Endothelial cell of umbilical vein (primary cell): ENCODE measurements at regions of chr2 and their contacts with region 1.

Region 1: GRCh38 chr2:173448938-173449471 is 94.3 kb downstream of the CDCA7 start:
- DNase-seq: peak; percentile 64
- H3K4me3 ChIP-seq: peak overlapping the region; percentile 29 to 45 (median 37)
- H3K27ac ChIP-seq: no peak overlapping the region
- H3K4me1 ChIP-seq: peaks cover 3% of the 10 kb centered on the region
- H3K27me3 ChIP-seq: peaks cover 3 to 9% of the 10 kb centered on the region in 2 experiments
- CTCF ChIP-seq: peak; percentile 63 to 65
- POLR2A ChIP-seq: peak; percentile 21

Region 2: GRCh38 chr2:173419506-173419905 is 29.5 kb before region 1 on chr2:
- CTCF ChIA-PET with region 1: interaction called, 10 read pairs
- POLR2A ChIA-PET with region 1: no interaction called
- dilution Hi-C with region 1: no loop called
- intact Hi-C with region 1: no loop called
- DNase-seq: no peak
- H3K4me3 ChIP-seq: no peak overlapping the region
- H3K27ac ChIP-seq: no peak overlapping the region
- H3K4me1 ChIP-seq: no peaks in the 10 kb centered on the region
- H3K27me3 ChIP-seq: no peaks in the 10 kb centered on the region
- CTCF ChIP-seq: no peak
- POLR2A ChIP-seq: no peak

Region 3: GRCh38 chr2:173583196-173583595 is 134.2 kb after region 1 on chr2:
- CTCF ChIA-PET with region 1: no interaction called
- POLR2A ChIA-PET with region 1: no interaction called
- dilution Hi-C with region 1: no loop called
- intact Hi-C with region 1: no loop called
- DNase-seq: no peak
- H3K4me3 ChIP-seq: no peak overlapping the region
- H3K27ac ChIP-seq: no peak overlapping the region
- H3K4me1 ChIP-seq: peaks cover 8% of the 10 kb centered on the region
- H3K27me3 ChIP-seq: no peaks in the 10 kb centered on the region
- CTCF ChIP-seq: no peak
- POLR2A ChIP-seq: no peak